ENCODE measurements at regions of chr11 and their contacts with region 1.

Region 1: GRCh38 chr11:128630367-128631230 is 43.2 kb upstream of the ETS1 start:
- DNase-seq: peak; percentile 85 to 94 (median 91)
- H3K4me3 ChIP-seq: no peak overlapping the region
- H3K27ac ChIP-seq: peak overlapping the region in 1 of 2 donors; percentile 24
- H3K4me1 ChIP-seq: no peaks in the 10 kb centered on the region
- H3K27me3 ChIP-seq: no peaks in the 10 kb centered on the region
- CTCF ChIP-seq: peak; percentile 65 to 91 (median 82)
- EP300 ChIP-seq: no peak
- POLR2A ChIP-seq: no peak

Region 2: DNA sequence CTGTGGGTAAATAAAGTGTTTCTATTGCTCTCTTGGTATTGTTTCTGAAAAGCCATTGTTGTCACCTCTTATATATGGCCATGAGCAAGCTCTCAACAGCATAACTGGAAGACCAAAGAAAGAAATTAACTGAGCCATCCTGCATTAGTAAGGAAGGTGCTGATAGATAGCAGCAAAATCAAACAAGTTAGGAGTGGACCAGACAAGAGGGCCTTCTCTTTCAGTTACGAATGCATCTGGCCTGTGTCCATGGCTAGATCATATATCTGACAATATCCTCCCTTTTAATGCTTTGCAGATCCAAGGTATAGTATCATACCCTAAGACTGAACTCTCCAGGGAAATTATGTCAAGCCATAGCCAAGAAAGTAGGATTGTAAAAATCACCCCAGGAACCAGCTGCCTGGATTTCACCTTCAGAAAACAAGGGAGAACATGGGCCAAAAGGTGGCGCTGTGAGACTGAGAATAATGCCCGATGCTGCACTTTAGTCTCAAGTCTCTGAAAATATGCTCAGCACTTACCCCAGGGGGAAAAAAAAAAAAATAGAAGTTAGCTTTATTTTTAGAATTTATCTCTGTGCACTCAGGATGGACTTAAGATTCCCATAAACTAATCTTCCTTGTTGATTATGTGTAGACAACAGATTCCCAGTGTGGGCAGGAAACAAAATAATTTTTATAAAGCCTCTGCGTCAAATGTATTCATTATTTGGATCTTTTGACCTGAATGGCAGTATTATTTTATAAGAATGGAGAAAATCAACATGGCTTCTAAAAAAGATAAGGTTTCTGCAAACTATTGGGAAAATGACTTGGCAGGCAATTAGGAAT is 458.3 kb before region 1 on chr11:
- intact Hi-C with region 1: loop called (anchors 2 to 5 kb)
- DNase-seq: peak; percentile 68 to 87 (median 84)
- H3K4me3 ChIP-seq: no peak overlapping the region
- H3K27ac ChIP-seq: no peak overlapping the region
- H3K4me1 ChIP-seq: no peaks in the 10 kb centered on the region
- H3K27me3 ChIP-seq: no peaks in the 10 kb centered on the region
- CTCF ChIP-seq: peak; percentile 59 to 79 (median 72)
- EP300 ChIP-seq: no peak
- POLR2A ChIP-seq: no peak

Region 3: DNA sequence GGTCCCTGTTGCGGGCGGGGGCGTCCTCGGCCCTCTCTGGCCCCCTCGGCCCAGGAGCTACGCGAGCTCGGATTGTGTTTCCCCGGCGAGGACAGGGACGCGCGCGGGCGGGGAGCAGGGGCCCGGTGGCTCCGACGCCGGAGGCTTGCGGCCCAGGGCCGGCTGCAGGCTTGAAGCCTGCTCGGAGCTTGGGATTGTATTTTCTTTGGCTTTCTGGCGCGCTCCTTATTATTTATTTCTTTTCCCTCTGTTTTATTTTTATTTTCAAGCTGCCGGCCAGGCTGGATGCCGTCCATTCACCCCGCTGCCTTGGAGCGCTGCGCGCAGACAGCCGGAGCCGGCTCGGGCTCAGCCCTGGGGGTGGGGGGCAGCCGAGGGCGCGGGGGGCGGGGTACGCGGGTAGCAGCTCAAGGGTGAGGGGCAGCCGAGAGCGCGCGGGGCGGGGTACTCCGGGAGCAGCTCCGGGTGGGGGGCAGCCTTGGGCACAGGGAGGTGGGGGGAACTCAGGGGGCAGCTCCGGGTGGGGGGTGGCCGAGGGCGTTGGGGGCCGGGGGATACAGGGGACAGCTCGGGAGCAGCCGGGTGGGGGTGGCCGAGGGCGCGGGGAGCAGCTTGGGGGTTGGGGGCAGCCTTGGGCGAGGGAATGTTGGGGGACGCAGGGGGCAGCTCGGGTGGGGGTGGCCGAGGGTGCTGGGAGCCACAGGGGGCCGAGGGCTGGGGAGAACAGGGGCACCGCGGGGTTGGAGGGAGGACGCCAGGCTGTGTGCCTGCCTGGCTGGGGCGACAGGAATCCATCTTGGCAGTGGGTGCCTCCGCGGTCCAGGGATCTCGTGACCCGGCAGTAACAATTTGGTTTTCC is 193.8 kb after region 1 on chr11:
- intact Hi-C with region 1: loop called in 1 of 4 experiments (anchors 5 kb)
- DNase-seq: peak in 3 of 5 donors; percentile 53 to 67 (median 55)
- H3K4me3 ChIP-seq: no peak overlapping the region
- H3K27ac ChIP-seq: peak overlapping the region in 1 of 2 donors; percentile 36
- H3K4me1 ChIP-seq: no peaks in the 10 kb centered on the region
- H3K27me3 ChIP-seq: no peaks in the 10 kb centered on the region
- CTCF ChIP-seq: no peak
- EP300 ChIP-seq: no peak
- POLR2A ChIP-seq: no peak